Activated CD8-positive, alpha-beta T cell treated with anti-CD3 and anti-CD28 coated beads for 36 hours (primary cell): ENCODE measurements at regions of chr1 and their contacts with region 1.

Region 1: GRCh38 chr1:12477936-12478611 is 139.9 kb downstream of the DHRS3 start:
- DNase-seq: peak; percentile 66
- ATAC-seq: peak; percentile 39
- H3K4me3 Mint-ChIP-seq: peak overlapping the region; percentile 40
- H3K27ac Mint-ChIP-seq: peak overlapping the region; percentile 95
- H3K4me1 Mint-ChIP-seq: peaks cover 88% of the 10 kb centered on the region
- H3K27me3 Mint-ChIP-seq: no peaks in the 10 kb centered on the region
- CTCF ChIP-seq: no peak

Region 2: GRCh38 chr1:12353981-12354380 is 124.1 kb before region 1 on chr1:
- CTCF ChIA-PET with region 1: no interaction called
- POLR2A ChIA-PET with region 1: no interaction called
- intact Hi-C with region 1: no loop called
- DNase-seq: no peak
- ATAC-seq: no peak
- H3K4me3 Mint-ChIP-seq: no peak overlapping the region
- H3K27ac Mint-ChIP-seq: no peak overlapping the region
- H3K4me1 Mint-ChIP-seq: no peaks in the 10 kb centered on the region
- H3K27me3 Mint-ChIP-seq: no peaks in the 10 kb centered on the region
- CTCF ChIP-seq: no peak

Region 3: GRCh38 chr1:12501661-12502060 is 23.6 kb after region 1 on chr1:
- CTCF ChIA-PET with region 1: interaction called, 5 read pairs
- POLR2A ChIA-PET with region 1: interaction called, 12 read pairs
- intact Hi-C with region 1: no loop called
- DNase-seq: no peak
- ATAC-seq: no peak
- H3K4me3 Mint-ChIP-seq: no peak overlapping the region
- H3K27ac Mint-ChIP-seq: peak overlapping the region; percentile 88
- H3K4me1 Mint-ChIP-seq: peaks cover 53% of the 10 kb centered on the region
- H3K27me3 Mint-ChIP-seq: no peaks in the 10 kb centered on the region
- CTCF ChIP-seq: no peak

Region 4: DNA sequence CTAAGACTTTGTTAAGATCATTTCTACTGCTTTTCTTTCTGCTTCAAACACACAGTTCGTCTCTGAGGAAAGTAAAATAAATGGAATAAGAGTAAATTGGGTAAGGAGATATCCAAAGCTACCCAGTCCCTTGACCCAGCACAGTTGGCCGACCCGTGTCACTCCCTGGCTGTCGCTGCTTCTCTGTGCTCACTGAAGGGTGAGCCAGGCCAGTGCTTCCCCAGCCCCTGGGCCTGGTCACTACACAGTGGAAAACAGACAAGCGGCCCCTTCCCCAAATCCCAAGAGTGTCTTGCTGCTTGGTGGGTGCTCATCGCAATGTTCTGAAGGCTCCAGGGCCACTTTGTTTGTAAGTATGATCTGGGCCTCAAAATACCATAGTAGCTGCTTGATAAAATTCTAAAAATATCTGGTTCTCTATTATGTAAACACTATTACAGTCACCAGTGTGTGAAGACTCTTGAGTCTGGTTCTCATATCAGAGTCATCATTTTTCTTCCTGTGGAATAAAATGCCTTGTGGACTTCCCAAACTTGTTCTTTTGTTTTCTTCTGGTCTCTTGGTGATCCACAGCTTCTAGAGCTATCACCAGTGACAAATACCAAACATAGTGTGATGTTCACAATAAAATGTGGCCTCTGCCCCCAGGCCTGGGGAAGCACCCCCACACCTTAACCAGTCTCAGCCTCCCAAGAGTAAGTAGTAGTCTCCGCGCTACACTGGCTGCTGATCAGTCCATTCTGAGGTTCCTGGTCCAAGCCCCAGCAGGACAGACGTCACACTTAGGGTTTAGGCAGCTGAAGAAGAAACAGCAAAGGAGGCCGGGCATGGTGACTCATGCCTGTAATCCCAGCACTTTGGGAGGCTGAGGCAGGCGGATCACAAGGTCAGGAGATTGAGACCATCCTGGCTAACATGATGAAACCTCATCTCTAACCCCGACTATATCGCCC is 33.7 kb after region 1 on chr1:
- CTCF ChIA-PET with region 1: interaction called, 18 read pairs
- POLR2A ChIA-PET with region 1: interaction called, 28 read pairs
- intact Hi-C with region 1: loop called (anchors 5 kb)
- DNase-seq: no peak
- ATAC-seq: no peak
- H3K4me3 Mint-ChIP-seq: peak overlapping the region; percentile 75
- H3K27ac Mint-ChIP-seq: peak overlapping the region; percentile 100
- H3K4me1 Mint-ChIP-seq: peaks cover 60% of the 10 kb centered on the region
- H3K27me3 Mint-ChIP-seq: no peaks in the 10 kb centered on the region
- CTCF ChIP-seq: no peak

Region 5: GRCh38 chr1:12579793-12580499 is 101.9 kb after region 1 on chr1:
- CTCF ChIA-PET with region 1: no interaction called
- POLR2A ChIA-PET with region 1: no interaction called
- intact Hi-C with region 1: no loop called
- DNase-seq: no peak
- ATAC-seq: no peak
- H3K4me3 Mint-ChIP-seq: no peak overlapping the region
- H3K27ac Mint-ChIP-seq: no peak overlapping the region
- H3K4me1 Mint-ChIP-seq: peaks cover 2% of the 10 kb centered on the region
- H3K27me3 Mint-ChIP-seq: no peaks in the 10 kb centered on the region
- CTCF ChIP-seq: no peak